HEK293 (cell line): ENCODE measurements at regions of chr19 and their contacts with region 1.

Region 1: GRCh38 chr19:38402967-38403861 is at the start of gene FAM98C:
- H3K4me3 ChIP-seq: peak within 1 kb of the TSS; percentile 57
- H3K27ac ChIP-seq: peak within 1 kb of the TSS; percentile 91
- H3K4me1 ChIP-seq: peaks cover 10% of the 10 kb centered on the region
- CTCF ChIP-seq: peak; percentile 100

Region 2: GRCh38 chr19:38245826-38246498 is 157.3 kb before region 1 on chr19:
- CTCF ChIA-PET with region 1: interaction called, 17 read pairs
- POLR2A ChIA-PET with region 1: no interaction called
- H3K4me3 ChIP-seq: no peak overlapping the region
- H3K27ac ChIP-seq: no peak overlapping the region
- H3K4me1 ChIP-seq: peaks cover 6% of the 10 kb centered on the region; the same call in 1 of the 2 replicates
- CTCF ChIP-seq: no peak

Region 3: DNA sequence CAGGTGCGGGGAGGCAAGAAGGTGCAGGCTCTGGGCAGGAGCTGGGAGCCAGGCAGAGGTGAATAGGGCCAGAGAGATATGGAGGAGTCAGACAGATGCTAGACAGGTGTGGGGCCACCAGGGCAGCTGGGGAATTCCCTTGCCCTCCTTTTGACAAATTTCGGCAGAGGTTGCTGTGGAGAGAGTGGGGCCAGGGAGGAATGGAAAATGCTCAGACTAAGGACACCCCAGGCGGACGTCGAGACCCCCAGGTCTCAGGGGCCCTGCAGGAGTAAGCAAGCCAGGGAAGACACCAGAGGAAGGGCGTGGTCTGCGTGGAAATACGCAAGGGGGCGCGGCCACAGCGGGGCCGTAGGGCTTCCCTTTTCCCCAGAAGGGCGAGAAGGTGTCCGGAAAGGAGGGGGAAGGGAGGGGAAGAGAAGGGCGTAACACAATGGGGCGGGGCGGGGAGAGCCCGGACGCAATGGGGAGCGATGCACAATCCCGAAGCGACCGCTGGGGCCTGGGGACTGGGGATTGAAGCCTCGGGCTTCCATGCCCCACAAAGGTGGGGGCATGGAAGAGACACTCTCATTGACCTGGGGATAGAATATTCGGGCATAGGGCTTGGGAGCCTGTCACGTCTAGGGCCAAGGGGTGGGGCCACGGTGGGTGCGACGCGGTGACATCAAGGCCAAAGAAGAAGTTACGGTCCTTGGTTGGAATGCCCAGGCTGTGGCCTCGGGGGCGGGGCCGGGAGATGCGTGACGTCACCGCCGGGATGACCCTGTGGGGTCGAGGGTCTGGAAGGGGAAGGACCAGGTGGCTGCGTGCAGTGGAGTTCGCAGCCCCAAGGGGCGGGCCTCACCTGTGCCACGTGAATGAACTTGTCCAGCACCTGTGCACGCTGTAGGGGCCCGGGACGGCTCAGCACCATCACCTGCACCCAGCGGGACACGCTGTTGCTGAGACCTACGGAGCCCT is 14.6 kb after region 1 on chr19:
- CTCF ChIA-PET with region 1: interaction called, 32 read pairs
- POLR2A ChIA-PET with region 1: interaction called, 3 read pairs
- H3K4me3 ChIP-seq: peak overlapping the region; percentile 21
- H3K27ac ChIP-seq: no peak overlapping the region; the same call in 1 of the 2 replicates
- H3K4me1 ChIP-seq: peaks cover 11% of the 10 kb centered on the region
- CTCF ChIP-seq: no peak; the same call in 1 of the 2 replicates

Region 4: GRCh38 chr19:38496603-38497487 is 93.6 kb after region 1 on chr19:
- CTCF ChIA-PET with region 1: interaction called, 12 read pairs
- POLR2A ChIA-PET with region 1: no interaction called
- H3K4me3 ChIP-seq: no peak overlapping the region
- H3K27ac ChIP-seq: no peak overlapping the region
- H3K4me1 ChIP-seq: no peaks in the 10 kb centered on the region
- CTCF ChIP-seq: no peak

Region 5: DNA sequence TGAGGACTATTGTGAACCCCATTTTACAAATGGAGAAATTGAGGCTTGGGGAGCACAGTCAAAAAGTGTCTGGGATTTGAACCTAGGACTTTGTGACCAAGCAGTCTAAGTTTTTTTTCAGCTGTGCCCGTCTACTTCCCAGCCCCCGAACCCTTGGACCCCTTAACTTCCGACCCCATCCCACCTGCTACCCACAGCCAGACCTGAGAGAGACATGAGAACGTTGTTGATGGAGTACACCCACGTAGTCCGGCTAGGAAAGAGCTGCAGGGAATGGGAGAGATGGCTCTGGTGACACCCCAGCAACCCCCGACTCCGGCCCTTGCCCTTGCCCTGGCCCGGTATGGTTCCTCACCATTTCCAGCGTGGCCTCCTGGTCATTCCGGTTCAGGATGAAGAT is 196.5 kb after region 1 on chr19:
- CTCF ChIA-PET with region 1: no interaction called
- POLR2A ChIA-PET with region 1: no interaction called
- H3K4me3 ChIP-seq: no peak overlapping the region
- H3K27ac ChIP-seq: no peak overlapping the region
- H3K4me1 ChIP-seq: peaks cover 12% of the 10 kb centered on the region
- CTCF ChIP-seq: no peak

Region 6: DNA sequence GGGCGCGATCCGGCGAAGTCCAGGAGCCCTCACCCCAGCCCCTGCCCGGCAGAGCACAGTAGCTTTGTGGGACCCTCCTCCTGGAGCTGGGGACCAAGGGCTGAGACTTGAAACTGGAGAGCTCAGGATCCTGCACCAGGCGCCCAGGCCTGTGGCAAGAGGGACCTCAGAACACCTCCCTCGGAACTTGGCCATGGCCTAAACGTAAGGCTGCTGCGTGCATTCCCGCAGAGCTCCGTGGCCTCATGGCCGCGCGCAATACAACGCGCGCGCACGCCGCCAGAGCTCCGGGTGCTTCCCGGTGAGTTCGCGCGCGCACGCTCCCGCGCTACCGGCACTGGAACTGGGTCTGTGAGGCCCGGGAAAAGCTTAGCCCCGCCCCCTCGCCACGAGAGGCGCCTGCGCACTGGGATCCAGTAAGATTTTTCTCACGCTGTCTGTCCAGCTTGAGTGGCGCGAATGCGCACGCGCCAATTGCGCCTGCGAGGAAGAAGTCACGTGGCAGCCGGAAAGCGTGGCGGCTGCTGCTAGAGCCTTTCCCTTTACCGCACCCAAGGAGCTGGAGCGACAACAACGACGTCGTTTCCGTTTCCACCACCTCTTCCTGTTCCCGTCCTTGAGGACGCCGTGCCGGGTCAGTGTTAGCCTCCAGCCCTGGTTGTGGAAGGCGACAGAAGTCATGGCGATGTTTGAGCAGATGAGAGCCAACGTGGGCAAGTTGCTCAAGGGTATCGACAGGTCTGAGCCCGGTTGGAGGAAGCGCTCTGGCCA is 215.6 kb after region 1 on chr19 and contains the start of gene EIF3K:
- CTCF ChIA-PET with region 1: interaction called, 6 read pairs
- POLR2A ChIA-PET with region 1: interaction called, 21 read pairs
- H3K4me3 ChIP-seq: peak within 1 kb of the TSS; percentile 65
- H3K27ac ChIP-seq: peak within 1 kb of the TSS; percentile 94
- H3K4me1 ChIP-seq: peaks cover 16% of the 10 kb centered on the region
- CTCF ChIP-seq: no peak

Region 7: DNA sequence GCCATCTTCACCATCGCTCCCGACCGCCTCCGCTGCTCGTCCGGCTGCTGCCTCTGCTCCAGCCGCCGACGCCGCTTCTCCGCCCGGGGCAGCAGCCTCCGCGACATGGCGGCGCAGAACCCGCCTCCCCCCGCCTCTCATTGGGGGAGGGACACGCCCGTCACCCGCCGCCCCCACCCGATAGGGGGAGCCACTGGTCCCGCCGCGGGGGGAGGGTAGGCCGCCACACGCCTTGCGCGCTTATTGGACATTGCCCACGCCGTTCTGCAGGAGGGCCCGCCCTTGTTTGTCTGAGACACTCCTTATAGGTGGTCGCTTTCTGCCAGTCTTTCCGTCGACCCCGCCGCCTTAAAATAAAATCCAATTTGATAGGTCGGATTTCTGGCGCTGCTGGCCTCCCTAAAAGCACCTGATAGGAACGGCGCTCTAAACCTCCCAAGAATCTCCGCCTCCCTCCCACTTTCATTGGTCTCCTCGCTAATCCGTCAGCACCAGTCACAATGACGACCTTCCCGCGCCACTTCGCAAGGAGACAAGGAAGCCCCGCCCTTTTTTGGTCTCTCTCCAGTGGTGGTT is 446.7 kb after region 1 on chr19 and contains the start of gene HNRNPL:
- CTCF ChIA-PET with region 1: interaction called, 13 read pairs
- POLR2A ChIA-PET with region 1: interaction called, 4 read pairs
- H3K4me3 ChIP-seq: peak within 1 kb of the TSS; percentile 57
- H3K27ac ChIP-seq: peak within 1 kb of the TSS; percentile 100
- H3K4me1 ChIP-seq: peaks cover 32% of the 10 kb centered on the region
- CTCF ChIP-seq: peak; percentile 100